Breast epithelium (tissue), 4 donors: ENCODE measurements at regions of chr6 and their contacts with region 1.

Region 1: DNA sequence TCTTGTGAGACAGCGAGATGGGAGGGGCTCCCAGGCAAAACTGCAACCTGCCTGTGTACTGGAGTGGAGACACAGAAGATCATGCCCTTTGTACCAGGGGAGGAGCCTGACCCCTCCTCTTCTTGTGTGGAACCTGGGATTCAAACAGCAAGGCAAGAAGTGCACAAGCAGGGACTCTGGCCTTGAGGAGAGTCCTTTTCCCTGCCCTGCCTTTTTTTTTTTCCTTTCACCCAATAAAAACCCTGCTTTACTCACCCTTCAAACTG is 251.8 kb upstream of the OPRM1 start:
- DNase-seq: no peak
- H3K4me3 ChIP-seq: no peak overlapping the region
- H3K27ac ChIP-seq: no peak overlapping the region
- H3K4me1 ChIP-seq: no peaks in the 10 kb centered on the region
- H3K27me3 ChIP-seq: no peaks in the 10 kb centered on the region
- CTCF ChIP-seq: no peak
- POLR2A ChIP-seq: no peak

Region 2: DNA sequence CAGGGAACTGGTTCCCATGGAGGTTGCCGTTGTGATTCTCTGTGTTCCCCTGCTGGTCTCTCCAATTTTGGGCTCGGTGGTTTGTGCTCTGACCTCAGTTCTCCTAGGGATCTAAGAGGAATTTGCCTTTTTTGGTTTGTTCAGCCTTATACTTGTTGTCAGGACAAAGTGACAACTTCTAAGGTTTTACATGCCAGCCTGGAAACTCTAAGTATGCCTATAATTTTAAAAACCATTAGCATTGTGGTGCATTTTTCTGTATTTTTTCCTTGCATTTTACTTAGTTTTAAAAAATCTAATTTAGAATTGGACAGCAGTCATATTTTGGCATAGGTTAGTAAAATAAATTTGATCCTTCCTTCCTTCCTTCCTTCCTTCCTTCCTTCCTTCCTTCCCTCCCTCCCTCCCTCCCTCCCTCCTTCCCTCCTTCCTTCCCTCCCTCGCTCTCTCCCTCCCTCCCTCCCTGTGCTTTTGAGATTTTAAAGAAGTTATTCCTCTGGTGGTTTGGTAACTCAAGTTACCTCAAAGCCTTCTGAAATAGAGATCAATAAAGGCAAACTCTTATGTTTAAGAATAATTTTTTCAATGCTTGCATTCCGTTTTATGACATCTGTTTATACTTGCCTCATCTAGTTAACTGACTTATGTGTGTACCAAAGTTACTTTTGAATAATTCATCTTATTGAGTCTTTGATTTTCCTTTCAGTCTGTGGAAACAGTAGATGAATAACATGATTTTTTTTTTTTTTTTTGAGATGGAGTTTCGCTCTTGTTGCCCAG is 514.9 kb before region 1 on chr6:
- intact Hi-C with region 1: no loop called
- DNase-seq: no peak
- H3K4me3 ChIP-seq: no peak overlapping the region
- H3K27ac ChIP-seq: no peak overlapping the region
- H3K4me1 ChIP-seq: no peaks in the 10 kb centered on the region
- H3K27me3 ChIP-seq: no peaks in the 10 kb centered on the region
- CTCF ChIP-seq: no peak
- POLR2A ChIP-seq: no peak

Region 3: GRCh38 chr6:153484056-153484455 is 303.2 kb before region 1 on chr6:
- intact Hi-C with region 1: no loop called
- DNase-seq: no peak
- H3K4me3 ChIP-seq: no peak overlapping the region
- H3K27ac ChIP-seq: no peak overlapping the region
- H3K4me1 ChIP-seq: no peaks in the 10 kb centered on the region
- H3K27me3 ChIP-seq: no peaks in the 10 kb centered on the region
- CTCF ChIP-seq: no peak
- POLR2A ChIP-seq: no peak

Region 4: DNA sequence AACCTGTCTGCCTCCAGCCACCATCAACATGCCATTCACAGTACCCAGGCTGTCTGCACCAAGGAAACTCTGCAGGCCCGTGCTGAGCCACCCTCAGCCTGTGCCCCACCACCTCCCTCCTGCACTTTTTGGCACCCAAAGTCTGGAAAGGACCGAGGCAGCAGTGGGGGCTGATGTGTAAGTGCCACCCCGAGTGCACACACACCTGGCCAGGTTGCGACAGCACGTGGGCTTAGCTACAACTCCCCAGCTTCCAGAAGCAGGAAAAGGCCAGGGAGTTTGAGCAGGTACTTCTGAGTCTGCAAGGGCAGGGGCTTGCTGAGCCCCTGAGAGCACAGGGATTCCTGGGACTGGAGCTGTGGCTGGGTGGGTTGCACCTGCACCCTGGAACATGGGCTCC is 51.5 kb before region 1 on chr6:
- intact Hi-C with region 1: loop called (anchors 2 kb)
- DNase-seq: no peak
- H3K4me3 ChIP-seq: no peak overlapping the region
- H3K27ac ChIP-seq: no peak overlapping the region
- H3K4me1 ChIP-seq: no peaks in the 10 kb centered on the region
- H3K27me3 ChIP-seq: no peaks in the 10 kb centered on the region
- CTCF ChIP-seq: no peak
- POLR2A ChIP-seq: no peak